Vagina (tissue), 2 donors: ENCODE measurements at regions of chr2 and their contacts with region 1.

Region 1: GRCh38 chr2:78861546-78861945 is 164.0 kb upstream of the REG3G start:
- DNase-seq: no peak
- H3K4me3 ChIP-seq: no peak overlapping the region
- H3K27ac ChIP-seq: no peak overlapping the region
- H3K4me1 ChIP-seq: no peaks in the 10 kb centered on the region
- H3K27me3 ChIP-seq: no peaks in the 10 kb centered on the region
- CTCF ChIP-seq: no peak
- POLR2A ChIP-seq: no peak

Region 2: GRCh38 chr2:78845664-78846185 is 15.8 kb before region 1 on chr2:
- intact Hi-C with region 1: no loop called
- DNase-seq: no peak
- H3K4me3 ChIP-seq: no peak overlapping the region
- H3K27ac ChIP-seq: no peak overlapping the region
- H3K4me1 ChIP-seq: no peaks in the 10 kb centered on the region
- H3K27me3 ChIP-seq: no peaks in the 10 kb centered on the region
- CTCF ChIP-seq: no peak
- POLR2A ChIP-seq: no peak

Region 3: DNA sequence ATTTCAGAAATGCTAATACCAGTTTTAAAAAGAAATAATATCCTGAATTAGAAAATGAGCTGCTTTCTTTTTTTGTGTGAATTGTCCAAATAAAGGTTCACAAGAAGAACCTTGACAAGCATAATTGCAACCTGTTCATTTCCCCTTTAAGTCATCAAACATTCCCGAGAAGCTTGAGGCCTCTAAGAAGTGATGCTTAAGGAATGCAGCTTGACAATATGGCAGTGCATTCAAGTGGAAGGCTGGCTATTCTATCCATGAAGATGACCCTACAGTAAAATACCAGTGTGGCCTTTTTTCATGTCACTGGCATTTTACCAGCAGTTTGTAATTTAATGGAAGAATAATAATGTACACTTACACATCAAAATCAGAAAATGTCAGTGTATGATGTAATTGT is 868.0 kb after region 1 on chr2:
- intact Hi-C with region 1: loop called (anchors 5 kb)
- DNase-seq: no peak
- H3K4me3 ChIP-seq: no peak overlapping the region
- H3K27ac ChIP-seq: no peak overlapping the region
- H3K4me1 ChIP-seq: no peaks in the 10 kb centered on the region
- H3K27me3 ChIP-seq: no peaks in the 10 kb centered on the region
- CTCF ChIP-seq: no peak
- POLR2A ChIP-seq: no peak